CD4-positive, alpha-beta memory T cell (primary cell): ENCODE measurements at regions of chr5 and their contacts with region 1.

Region 1: DNA sequence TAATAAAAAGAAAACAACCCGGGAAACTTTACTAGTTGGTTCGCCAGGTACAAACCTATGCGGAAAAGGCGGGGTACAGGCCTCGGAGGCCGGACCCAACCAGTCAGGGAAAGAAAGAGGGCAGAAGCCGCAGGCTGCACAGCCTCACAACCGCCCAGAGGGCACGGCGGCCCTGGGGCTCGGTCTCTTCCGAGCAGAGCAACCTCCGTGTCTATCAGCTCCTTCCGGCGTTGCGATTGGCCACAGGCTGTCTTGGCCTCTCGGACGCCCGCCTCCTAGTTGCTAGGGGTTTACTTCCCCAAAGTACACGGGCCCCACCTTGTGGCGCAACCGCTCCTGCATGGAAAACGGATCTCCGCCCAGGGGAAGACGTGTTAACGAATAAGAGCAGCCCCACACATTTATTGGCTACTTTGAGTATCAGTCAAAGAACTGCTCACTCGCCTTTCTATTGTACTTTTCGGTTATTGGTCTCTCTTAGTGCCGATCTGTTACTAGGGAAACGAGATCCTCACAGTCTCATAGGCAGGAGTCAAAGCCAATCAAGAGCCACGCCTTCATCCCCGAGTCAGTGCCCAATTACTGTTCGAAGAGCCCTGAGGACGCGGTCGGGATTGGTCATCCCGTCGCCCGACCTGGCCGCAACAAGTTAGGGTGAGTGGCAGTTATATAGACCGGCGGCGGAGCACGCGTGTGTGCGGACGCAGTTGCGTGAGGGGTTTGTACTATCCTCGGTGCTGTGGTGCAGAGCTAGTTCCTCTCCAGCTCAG is at the start of gene G3BP1:
- DNase-seq: peak; percentile 97 to 100 (median 100)
- H3K4me3 ChIP-seq: peak within 1 kb of the TSS; percentile 59 to 76
- H3K4me3 Mint-ChIP-seq: peak within 1 kb of the TSS; percentile 85 to 96 (median 94)
- H3K27ac ChIP-seq: peak within 1 kb of the TSS; percentile 92
- H3K27ac Mint-ChIP-seq: peak within 1 kb of the TSS in 6 of 7 donors; percentile 12 to 96 (median 88)
- H3K4me1 ChIP-seq: peaks cover 51% of the 10 kb centered on the region
- H3K4me1 Mint-ChIP-seq: peaks cover 31 to 51% (median 39%) of the 10 kb centered on the region in 4 donors
- H3K27me3 ChIP-seq: no peaks in the 10 kb centered on the region
- H3K27me3 Mint-ChIP-seq: no peaks in the 10 kb centered on the region
- total RNA-seq, gene G3BP1: 189 to 193 TPM

Region 2: DNA sequence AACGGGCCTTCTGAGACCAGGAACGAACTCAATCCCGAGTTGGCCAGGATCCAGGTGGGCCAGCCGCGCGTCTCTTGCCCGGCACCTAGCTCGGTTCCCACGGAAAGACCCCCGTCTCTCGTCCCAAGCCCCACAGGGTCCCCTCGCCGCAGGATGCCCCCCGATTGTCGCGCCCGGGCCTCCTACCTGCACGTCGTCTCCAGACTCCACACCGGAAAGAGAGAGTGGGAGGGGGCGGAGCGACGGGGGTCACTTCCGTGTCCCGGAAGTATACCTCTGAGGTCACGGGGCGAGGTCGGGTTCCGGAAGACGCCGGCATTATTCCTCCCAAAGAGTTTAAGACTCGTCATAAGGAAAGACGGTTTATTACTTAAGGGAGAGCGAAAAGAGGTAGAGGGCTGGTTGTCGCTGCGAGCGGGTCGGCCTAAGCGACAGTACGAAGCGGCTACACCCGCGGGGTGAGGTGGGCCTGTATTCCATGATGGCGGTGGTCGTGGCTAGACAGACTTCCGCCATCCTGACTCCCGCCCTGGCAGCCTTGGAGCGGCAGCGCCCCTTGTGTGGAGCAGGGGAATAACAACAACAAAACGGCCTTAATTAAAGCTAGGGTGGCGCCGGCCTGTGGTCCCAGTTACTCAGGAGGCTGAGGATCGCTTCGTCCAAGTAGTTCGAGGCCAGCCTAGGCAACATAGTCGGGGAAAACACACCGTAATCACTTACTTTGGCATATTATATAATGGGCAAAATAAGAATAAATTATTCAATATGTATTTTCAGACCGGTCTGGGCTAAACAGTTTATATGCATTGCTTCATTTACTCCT is 1321.7 kb before region 1 on chr5 and contains the start of gene RPS14:
- CTCF ChIA-PET with region 1: no interaction called
- POLR2A ChIA-PET with region 1: no interaction called
- intact Hi-C with region 1: loop called (anchors 5 kb)
- DNase-seq: peak; percentile 96 to 98 (median 97)
- H3K4me3 ChIP-seq: peak within 1 kb of the TSS; percentile 87 to 99
- H3K4me3 Mint-ChIP-seq: peak within 1 kb of the TSS; percentile 92 to 100 (median 98)
- H3K27ac ChIP-seq: peak within 1 kb of the TSS; percentile 99
- H3K27ac Mint-ChIP-seq: peak within 1 kb of the TSS; percentile 99 to 100 (median 100)
- H3K4me1 ChIP-seq: peaks cover 28% of the 10 kb centered on the region
- H3K4me1 Mint-ChIP-seq: peaks cover 15 to 46% (median 36%) of the 10 kb centered on the region in 4 donors
- H3K27me3 ChIP-seq: no peaks in the 10 kb centered on the region
- H3K27me3 Mint-ChIP-seq: no peaks in the 10 kb centered on the region
- total RNA-seq, gene RPS14: 5,260 to 5,575 TPM

Region 3: GRCh38 chr5:151252762-151253604 is 518.5 kb before region 1 on chr5 and contains the start of gene GM2A:
- CTCF ChIA-PET with region 1: interaction called, 3 read pairs
- POLR2A ChIA-PET with region 1: interaction called, 13 read pairs
- intact Hi-C with region 1: loop called (anchors 1 kb)
- DNase-seq: peak; percentile 96 to 99 (median 97)
- H3K4me3 ChIP-seq: peak within 1 kb of the TSS; percentile 64 to 68
- H3K4me3 Mint-ChIP-seq: peak within 1 kb of the TSS; percentile 89 to 97 (median 94)
- H3K27ac ChIP-seq: peak within 1 kb of the TSS; percentile 66
- H3K27ac Mint-ChIP-seq: peak within 1 kb of the TSS; percentile 86 to 96 (median 94)
- H3K4me1 ChIP-seq: peaks cover 37% of the 10 kb centered on the region
- H3K4me1 Mint-ChIP-seq: peaks cover 17 to 59% (median 36%) of the 10 kb centered on the region in 4 donors
- H3K27me3 ChIP-seq: no peaks in the 10 kb centered on the region
- H3K27me3 Mint-ChIP-seq: no peaks in the 10 kb centered on the region
- total RNA-seq, gene GM2A: 20.4 to 23.1 TPM

Region 4: GRCh38 chr5:151659001-151659754 is 112.3 kb before region 1 on chr5:
- CTCF ChIA-PET with region 1: interaction called, 16 read pairs
- POLR2A ChIA-PET with region 1: interaction called, 16 read pairs
- intact Hi-C with region 1: loop called (anchors 1 kb)
- DNase-seq: peak; percentile 66 to 76 (median 74)
- H3K4me3 ChIP-seq: no peak overlapping the region
- H3K4me3 Mint-ChIP-seq: no peak overlapping the region
- H3K27ac ChIP-seq: no peak overlapping the region
- H3K27ac Mint-ChIP-seq: peak overlapping the region in 1 of 7 donors; percentile 41
- H3K4me1 ChIP-seq: peaks cover 12% of the 10 kb centered on the region
- H3K4me1 Mint-ChIP-seq: peaks cover 4 to 18% (median 6%) of the 10 kb centered on the region in 4 donors
- H3K27me3 ChIP-seq: no peaks in the 10 kb centered on the region
- H3K27me3 Mint-ChIP-seq: peaks cover 0 to 14% of the 10 kb centered on the region in 2 donors

Region 5: DNA sequence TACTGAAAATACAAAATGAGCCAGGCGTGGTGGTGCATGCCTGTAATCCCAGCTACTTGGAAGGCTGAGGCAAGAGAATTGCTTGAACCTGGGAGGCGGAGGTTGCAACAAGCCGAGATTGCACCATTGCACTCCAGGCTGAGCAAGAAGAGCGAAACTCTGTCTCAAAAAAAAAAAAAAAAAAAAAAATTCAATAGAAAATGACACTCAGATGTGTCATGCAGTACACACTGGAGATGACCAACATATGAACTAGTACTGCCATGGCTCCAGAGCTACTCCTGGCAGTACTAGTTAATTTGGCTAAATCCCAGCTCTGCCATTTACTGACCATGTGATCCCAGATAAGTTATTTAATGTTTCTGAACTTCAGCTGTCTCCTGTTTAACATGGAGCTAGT is 20.4 kb before region 1 on chr5:
- CTCF ChIA-PET with region 1: interaction called, 6 read pairs
- POLR2A ChIA-PET with region 1: interaction called, 214 read pairs
- intact Hi-C with region 1: no loop called
- DNase-seq: no peak
- H3K4me3 ChIP-seq: no peak overlapping the region
- H3K4me3 Mint-ChIP-seq: no peak overlapping the region
- H3K27ac ChIP-seq: no peak overlapping the region
- H3K27ac Mint-ChIP-seq: peak overlapping the region in 1 of 7 donors; percentile 7
- H3K4me1 ChIP-seq: peaks cover 36% of the 10 kb centered on the region
- H3K4me1 Mint-ChIP-seq: peaks cover 23 to 66% (median 39%) of the 10 kb centered on the region in 4 donors
- H3K27me3 ChIP-seq: no peaks in the 10 kb centered on the region
- H3K27me3 Mint-ChIP-seq: no peaks in the 10 kb centered on the region

Region 6: DNA sequence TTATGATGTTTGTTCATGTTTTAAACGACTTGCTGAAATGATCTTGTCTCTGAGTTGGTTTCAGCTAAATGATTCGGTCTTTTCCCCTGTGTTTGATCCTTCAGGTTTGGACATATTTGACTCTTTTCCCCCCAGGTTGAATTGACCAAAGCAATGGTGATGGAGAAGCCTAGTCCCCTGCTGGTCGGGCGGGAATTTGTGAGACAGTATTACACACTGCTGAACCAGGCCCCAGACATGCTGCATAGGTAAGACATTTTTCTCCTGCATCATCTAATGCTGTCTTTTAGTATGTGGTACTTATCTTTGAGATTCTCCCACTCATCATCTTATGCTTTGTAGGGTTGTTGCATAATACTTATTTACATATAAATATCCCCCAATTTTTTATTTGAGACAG is 15.0 kb after region 1 on chr5:
- CTCF ChIA-PET with region 1: interaction called, 6 read pairs
- POLR2A ChIA-PET with region 1: interaction called, 20 read pairs
- intact Hi-C with region 1: loop called (anchors 2 kb)
- DNase-seq: no peak
- H3K4me3 ChIP-seq: no peak overlapping the region
- H3K4me3 Mint-ChIP-seq: peak overlapping the region in 3 of 8 donors; percentile 23 to 69 (median 55)
- H3K27ac ChIP-seq: no peak overlapping the region
- H3K27ac Mint-ChIP-seq: peak overlapping the region in 5 of 7 donors; percentile 3 to 73 (median 57)
- H3K4me1 ChIP-seq: peaks cover 40% of the 10 kb centered on the region
- H3K4me1 Mint-ChIP-seq: peaks cover 27 to 58% (median 42%) of the 10 kb centered on the region in 4 donors
- H3K27me3 ChIP-seq: no peaks in the 10 kb centered on the region
- H3K27me3 Mint-ChIP-seq: no peaks in the 10 kb centered on the region